PC-3 (cell line): ENCODE measurements at regions of chr2 and their contacts with region 1.

Region 1: GRCh38 chr2:199955339-199956261 is at the starts of genes MAIP1 and TYW5:
- DNase-seq: peak; percentile 82
- ATAC-seq: peak; percentile 87
- H3K4me3 ChIP-seq: peak within 1 kb of the TSS; percentile 94
- H3K27ac ChIP-seq: peak within 1 kb of the TSS; percentile 82
- H3K4me1 ChIP-seq: peaks cover 20% of the 10 kb centered on the region
- H3K27me3 ChIP-seq: no peaks in the 10 kb centered on the region
- CTCF ChIP-seq: 0 out of 2 replicates have a peak, but pooled peaks have one; percentile 18
- total RNA-seq, gene MAIP1: 44.7 and 49.2 TPM in 2 replicates
- total RNA-seq, gene TYW5: 5.4 and 9.0 TPM in 2 replicates

Region 2: DNA sequence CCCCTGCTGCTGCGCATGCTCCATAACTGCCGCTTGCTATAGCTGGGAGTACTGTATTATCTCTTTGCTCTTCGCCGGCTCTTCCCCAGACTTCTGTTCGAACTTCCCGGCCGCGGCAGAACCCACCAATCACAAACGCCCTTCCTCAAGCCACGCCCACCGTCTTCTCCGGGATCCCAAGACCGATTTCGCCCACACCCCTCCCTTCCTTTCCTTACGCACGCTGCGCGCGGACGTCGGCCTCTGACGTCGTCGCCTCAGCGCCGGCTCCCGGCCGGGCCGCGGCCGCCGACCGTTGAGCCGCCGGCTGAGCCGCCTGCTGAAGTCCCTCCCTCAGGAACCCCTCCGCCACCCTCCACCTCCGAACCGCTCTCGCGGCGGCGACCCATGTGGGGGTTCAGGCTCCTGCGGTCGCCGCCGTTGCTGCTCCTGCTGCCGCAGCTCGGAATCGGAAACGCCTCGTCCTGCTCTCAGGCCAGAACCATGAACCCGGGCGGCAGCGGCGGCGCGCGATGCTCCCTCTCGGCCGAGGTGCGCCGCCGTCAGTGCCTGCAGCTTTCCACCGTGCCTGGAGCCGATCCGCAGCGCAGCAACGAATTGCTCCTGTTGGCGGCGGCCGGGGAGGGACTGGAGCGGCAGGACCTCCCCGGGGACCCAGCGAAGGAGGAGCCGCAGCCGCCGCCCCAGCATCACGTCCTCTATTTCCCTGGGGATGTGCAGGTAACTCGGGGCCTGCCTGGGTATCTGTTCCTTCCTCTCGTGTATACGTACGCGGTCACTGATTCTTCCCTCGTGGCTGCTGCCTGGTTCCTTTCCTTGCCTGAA is 44.3 kb before region 1 on chr2 and contains the start of gene C2orf69:
- CTCF ChIA-PET with region 1: no interaction called
- POLR2A ChIA-PET with region 1: no interaction called
- intact Hi-C with region 1: loop called (anchors 1 kb)
- DNase-seq: peak; percentile 99
- ATAC-seq: peak; percentile 91
- H3K4me3 ChIP-seq: peak within 1 kb of the TSS; percentile 98
- H3K27ac ChIP-seq: peak within 1 kb of the TSS; percentile 72
- H3K4me1 ChIP-seq: peaks cover 16% of the 10 kb centered on the region
- H3K27me3 ChIP-seq: no peaks in the 10 kb centered on the region
- CTCF ChIP-seq: no peak
- total RNA-seq, gene C2orf69: 10.5 and 15.0 TPM in 2 replicates